B cell (primary cell): ENCODE measurements at regions of chr14 and their contacts with region 1.

Region 1: DNA sequence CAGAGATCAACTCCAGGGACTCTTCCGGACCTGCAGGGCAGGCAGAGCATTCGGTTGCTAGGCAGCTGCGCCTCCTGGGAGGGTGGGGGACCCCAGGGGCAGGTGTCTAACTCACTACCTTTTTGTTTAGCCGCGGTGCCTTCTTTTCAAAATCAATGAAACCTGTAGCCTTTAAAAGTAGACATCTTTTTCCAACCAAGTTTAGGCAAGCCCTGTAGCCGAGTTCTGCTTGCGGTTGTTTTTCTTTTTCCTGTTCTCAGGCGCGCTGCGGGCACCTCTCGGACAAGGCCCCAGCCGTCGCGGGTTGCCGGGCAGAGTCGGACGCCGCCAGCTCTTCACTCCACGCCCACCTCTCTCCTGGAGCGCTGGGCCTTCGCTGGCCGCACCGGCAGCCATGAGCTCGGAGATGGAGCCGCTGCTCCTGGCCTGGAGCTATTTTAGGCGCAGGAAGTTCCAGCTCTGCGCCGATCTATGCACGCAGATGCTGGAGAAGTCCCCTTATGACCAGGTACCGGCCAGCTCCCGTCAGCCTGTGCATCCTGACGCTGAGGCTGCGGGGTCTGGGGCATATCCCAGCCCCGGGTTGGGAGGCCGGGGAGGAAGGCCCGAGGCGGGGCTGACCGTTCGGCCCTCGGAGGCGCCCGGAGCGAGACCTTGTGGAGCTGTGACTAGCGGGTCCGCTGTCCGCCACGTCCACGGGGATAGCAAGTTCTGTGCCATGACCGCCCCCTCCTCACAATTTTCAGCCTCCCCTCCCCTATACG is at the start of gene TTC8:
- DNase-seq: peak; percentile 95
- ATAC-seq: peak; percentile 98
- H3K4me3 ChIP-seq: peak within 1 kb of the TSS; percentile 65 to 88 (median 81)
- H3K4me3 Mint-ChIP-seq: peak within 1 kb of the TSS; percentile 93
- H3K27ac ChIP-seq: peak within 1 kb of the TSS; percentile 82 to 98
- H3K27ac Mint-ChIP-seq: peak within 1 kb of the TSS; percentile 99
- H3K4me1 ChIP-seq: peaks cover 11 to 12% of the 10 kb centered on the region in 2 donors
- H3K4me1 Mint-ChIP-seq: peaks cover 15% of the 10 kb centered on the region
- H3K27me3 ChIP-seq: no peaks in the 10 kb centered on the region
- H3K27me3 Mint-ChIP-seq: peaks cover 19% of the 10 kb centered on the region
- CTCF ChIP-seq: no peak
- total RNA-seq, gene TTC8: 7.2 and 9.1 TPM in 2 replicates

Region 2: GRCh38 chr14:87992718-87993628 is 831.5 kb before region 1 on chr14 and contains the start of gene GALC:
- CTCF ChIA-PET with region 1: no interaction called
- POLR2A ChIA-PET with region 1: no interaction called
- intact Hi-C with region 1: loop called (anchors 2 kb)
- DNase-seq: peak; percentile 97
- ATAC-seq: peak; percentile 82
- H3K4me3 ChIP-seq: peak within 1 kb of the TSS; percentile 47 to 74 (median 66)
- H3K4me3 Mint-ChIP-seq: peak within 1 kb of the TSS; percentile 87
- H3K27ac ChIP-seq: peak within 1 kb of the TSS; percentile 95 to 97
- H3K27ac Mint-ChIP-seq: peak within 1 kb of the TSS; percentile 99
- H3K4me1 ChIP-seq: peaks cover 15 to 29% of the 10 kb centered on the region in 2 donors
- H3K4me1 Mint-ChIP-seq: peaks cover 38% of the 10 kb centered on the region
- H3K27me3 ChIP-seq: no peaks in the 10 kb centered on the region
- H3K27me3 Mint-ChIP-seq: no peaks in the 10 kb centered on the region
- CTCF ChIP-seq: no peak
- total RNA-seq, gene GALC: 15.6 and 17.8 TPM in 2 replicates

Region 3: DNA sequence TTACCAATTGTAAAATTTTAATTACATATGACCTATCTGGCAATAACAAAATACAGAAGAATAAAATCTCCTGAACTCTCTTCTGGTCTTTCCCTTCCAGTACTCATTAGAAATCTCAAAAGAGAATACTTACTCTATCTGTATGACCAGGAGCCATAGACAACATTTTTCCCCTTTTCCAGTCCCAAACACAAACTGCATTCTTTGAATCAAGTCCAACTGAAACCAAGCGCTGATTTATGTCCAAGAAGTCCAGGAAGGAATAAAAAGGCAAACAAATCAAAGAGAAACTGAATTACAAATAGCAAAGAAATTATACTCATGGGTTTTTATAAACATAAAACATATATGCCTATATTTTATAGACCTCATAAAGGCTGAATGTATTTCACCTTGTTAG is 78.4 kb before region 1 on chr14:
- CTCF ChIA-PET with region 1: no interaction called
- POLR2A ChIA-PET with region 1: no interaction called
- intact Hi-C with region 1: no loop called
- DNase-seq: no peak
- ATAC-seq: no peak
- H3K4me3 ChIP-seq: no peak overlapping the region
- H3K4me3 Mint-ChIP-seq: no peak overlapping the region
- H3K27ac ChIP-seq: no peak overlapping the region
- H3K27ac Mint-ChIP-seq: no peak overlapping the region
- H3K4me1 ChIP-seq: no peaks in the 10 kb centered on the region
- H3K4me1 Mint-ChIP-seq: no peaks in the 10 kb centered on the region
- H3K27me3 ChIP-seq: no peaks in the 10 kb centered on the region
- H3K27me3 Mint-ChIP-seq: no peaks in the 10 kb centered on the region
- CTCF ChIP-seq: no peak

Region 4: GRCh38 chr14:88792572-88793258 is 31.8 kb before region 1 on chr14 and contains the start of gene EML5:
- CTCF ChIA-PET with region 1: interaction called, 9 read pairs
- POLR2A ChIA-PET with region 1: interaction called, 4 read pairs
- intact Hi-C with region 1: loop called (anchors 1 kb)
- DNase-seq: peak; percentile 93
- ATAC-seq: peak; percentile 84
- H3K4me3 ChIP-seq: peak within 1 kb of the TSS; percentile 68 to 77 (median 74)
- H3K4me3 Mint-ChIP-seq: peak within 1 kb of the TSS; percentile 92
- H3K27ac ChIP-seq: peak within 1 kb of the TSS; percentile 68 to 83
- H3K27ac Mint-ChIP-seq: peak within 1 kb of the TSS; percentile 89
- H3K4me1 ChIP-seq: peaks cover 8 to 14% of the 10 kb centered on the region in 2 donors
- H3K4me1 Mint-ChIP-seq: peaks cover 19% of the 10 kb centered on the region
- H3K27me3 ChIP-seq: peaks cover 0 to 4% (median 2%) of the 10 kb centered on the region in 4 experiments
- H3K27me3 Mint-ChIP-seq: no peaks in the 10 kb centered on the region
- CTCF ChIP-seq: peak; percentile 17
- total RNA-seq, gene EML5: 6.5 and 6.9 TPM in 2 replicates

Region 5: GRCh38 chr14:88961214-88961613 is 136.7 kb after region 1 on chr14:
- CTCF ChIA-PET with region 1: no interaction called
- POLR2A ChIA-PET with region 1: no interaction called
- intact Hi-C with region 1: no loop called
- DNase-seq: no peak
- ATAC-seq: no peak
- H3K4me3 ChIP-seq: no peak overlapping the region
- H3K4me3 Mint-ChIP-seq: no peak overlapping the region
- H3K27ac ChIP-seq: no peak overlapping the region
- H3K27ac Mint-ChIP-seq: no peak overlapping the region
- H3K4me1 ChIP-seq: no peaks in the 10 kb centered on the region
- H3K4me1 Mint-ChIP-seq: no peaks in the 10 kb centered on the region
- H3K27me3 ChIP-seq: no peaks in the 10 kb centered on the region
- H3K27me3 Mint-ChIP-seq: peaks cover 27% of the 10 kb centered on the region
- CTCF ChIP-seq: no peak